ENCODE measurements at regions of chr15 and their contacts with region 1.

Region 1: DNA sequence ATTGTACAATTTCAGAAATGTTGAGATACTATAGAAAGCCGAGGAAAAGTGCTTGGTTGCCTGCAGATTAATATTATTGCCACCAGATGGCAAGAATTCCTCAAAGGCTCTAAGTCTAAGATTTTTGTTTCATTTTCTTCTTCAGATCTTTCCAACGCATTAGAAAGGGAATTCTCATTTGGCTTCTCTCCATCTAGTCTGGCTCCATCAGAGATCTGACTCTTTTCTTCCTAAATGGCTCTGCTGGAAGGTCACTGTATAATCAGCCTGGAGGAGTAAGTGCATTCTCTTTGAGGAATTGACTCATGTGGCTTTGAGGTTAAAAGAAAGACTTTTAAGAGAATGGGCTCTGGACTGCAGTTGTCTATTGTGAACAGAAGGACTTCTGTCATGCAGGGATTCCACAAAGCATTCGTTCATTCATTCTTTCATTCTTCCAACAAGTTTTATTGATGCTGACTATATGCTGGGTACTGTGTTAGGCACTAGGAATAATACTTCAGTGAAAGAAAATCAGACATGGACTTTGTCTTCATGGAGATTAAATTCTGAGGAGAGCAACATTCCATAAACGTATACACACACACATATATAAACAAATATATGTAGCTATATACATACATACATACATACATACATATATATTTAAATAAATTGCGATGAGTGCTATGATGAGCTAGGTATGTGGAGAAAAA is 55.3 kb downstream of the SLC28A2 start:
- DNase-seq: peak; percentile 3 to 40
- H3K4me3 ChIP-seq: no peak overlapping the region; the same call in 1 of the 2 replicates
- H3K27ac ChIP-seq: no peak overlapping the region
- H3K4me1 ChIP-seq: no peaks in the 10 kb centered on the region
- H3K27me3 ChIP-seq: no peaks in the 10 kb centered on the region
- CTCF ChIP-seq: peak; percentile 59

Region 2: DNA sequence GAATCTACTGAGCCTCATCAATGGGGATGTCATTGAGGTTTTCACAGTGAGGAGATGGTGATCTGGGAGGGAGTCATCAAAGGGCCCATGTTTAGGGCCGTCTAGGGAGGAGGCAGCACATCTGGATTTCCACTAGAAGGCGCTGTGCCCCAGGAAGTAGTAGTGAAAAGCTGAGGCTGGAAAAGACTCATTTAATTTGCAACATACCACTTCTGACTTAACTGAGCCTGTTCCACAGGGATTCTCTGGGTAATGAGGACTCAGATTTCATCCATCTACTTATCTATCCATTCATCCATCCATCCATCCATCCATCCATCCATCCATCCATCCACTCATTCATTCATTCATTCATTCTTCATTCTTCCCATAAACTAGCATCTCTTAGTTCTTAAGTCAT is 102.2 kb before region 1 on chr15:
- CTCF ChIA-PET with region 1: interaction called, 3 read pairs
- POLR2A ChIA-PET with region 1: no interaction called
- intact Hi-C with region 1: loop called (anchors 2 kb)
- DNase-seq: peak in 1 of 2 experiments; percentile 60
- H3K4me3 ChIP-seq: no peak overlapping the region
- H3K27ac ChIP-seq: no peak overlapping the region
- H3K4me1 ChIP-seq: no peaks in the 10 kb centered on the region
- H3K27me3 ChIP-seq: no peaks in the 10 kb centered on the region
- CTCF ChIP-seq: peak; percentile 76

Region 3: DNA sequence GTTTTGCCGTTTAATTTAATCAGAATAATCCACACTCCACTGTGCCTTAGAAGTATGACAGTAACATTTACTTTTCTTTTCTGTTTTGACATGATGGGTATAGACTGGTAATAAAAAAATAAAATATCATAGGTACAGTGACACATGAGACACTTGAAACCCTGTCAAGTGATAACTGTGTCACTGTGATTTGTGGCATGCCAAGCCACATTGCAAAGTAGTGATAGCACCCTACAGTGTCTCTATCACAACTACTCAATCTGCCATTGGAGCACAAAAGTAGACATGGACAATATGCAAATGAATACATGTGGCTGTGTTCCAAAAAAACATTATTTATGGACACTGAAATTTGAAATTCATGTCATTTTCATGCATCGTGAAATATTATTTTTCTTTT is 48.5 kb after region 1 on chr15:
- CTCF ChIA-PET with region 1: no interaction called
- POLR2A ChIA-PET with region 1: interaction called, 22 read pairs
- intact Hi-C with region 1: no loop called
- DNase-seq: no peak
- H3K4me3 ChIP-seq: no peak overlapping the region
- H3K27ac ChIP-seq: no peak overlapping the region
- H3K4me1 ChIP-seq: no peaks in the 10 kb centered on the region
- H3K27me3 ChIP-seq: no peaks in the 10 kb centered on the region
- CTCF ChIP-seq: no peak

Region 4: GRCh38 chr15:45378149-45378912 is 71.0 kb after region 1 on chr15 and contains the start of gene GATM:
- CTCF ChIA-PET with region 1: interaction called, 3 read pairs
- POLR2A ChIA-PET with region 1: interaction called, 6 read pairs
- intact Hi-C with region 1: loop called (anchors 1 kb)
- DNase-seq: peak; percentile 58 to 72
- H3K4me3 ChIP-seq: peak within 1 kb of the TSS; percentile 57
- H3K27ac ChIP-seq: no peak within 1 kb of the TSS
- H3K4me1 ChIP-seq: no peaks in the 10 kb centered on the region
- H3K27me3 ChIP-seq: no peaks in the 10 kb centered on the region
- CTCF ChIP-seq: peak; percentile 45; the same call in 1 of the 2 replicates
- total RNA-seq, gene GATM: 9.8 and 10.0 TPM in 2 replicates

Measured in PC-9 (cell line).